Endothelial cell of umbilical vein (primary cell): ENCODE measurements at regions of chr9 and their contacts with region 1.

Region 1: GRCh38 chr9:34252670-34253459 is 74.0 kb downstream of the UBAP1 start:
- DNase-seq: peak; percentile 52
- H3K4me3 ChIP-seq: no peak overlapping the region
- H3K27ac ChIP-seq: no peak overlapping the region
- H3K4me1 ChIP-seq: no peaks in the 10 kb centered on the region
- H3K27me3 ChIP-seq: no peaks in the 10 kb centered on the region
- CTCF ChIP-seq: peak; percentile 80 to 83
- POLR2A ChIP-seq: no peak

Region 2: GRCh38 chr9:34139477-34140146 is 113.3 kb before region 1 on chr9:
- CTCF ChIA-PET with region 1: interaction called, 10 read pairs
- POLR2A ChIA-PET with region 1: interaction called, 4 read pairs
- dilution Hi-C with region 1: no loop called
- intact Hi-C with region 1: no loop called
- DNase-seq: peak; percentile 89
- H3K4me3 ChIP-seq: no peak overlapping the region
- H3K27ac ChIP-seq: no peak overlapping the region
- H3K4me1 ChIP-seq: no peaks in the 10 kb centered on the region
- H3K27me3 ChIP-seq: no peaks in the 10 kb centered on the region
- CTCF ChIP-seq: peak; percentile 14 to 54
- POLR2A ChIP-seq: no peak

Region 3: DNA sequence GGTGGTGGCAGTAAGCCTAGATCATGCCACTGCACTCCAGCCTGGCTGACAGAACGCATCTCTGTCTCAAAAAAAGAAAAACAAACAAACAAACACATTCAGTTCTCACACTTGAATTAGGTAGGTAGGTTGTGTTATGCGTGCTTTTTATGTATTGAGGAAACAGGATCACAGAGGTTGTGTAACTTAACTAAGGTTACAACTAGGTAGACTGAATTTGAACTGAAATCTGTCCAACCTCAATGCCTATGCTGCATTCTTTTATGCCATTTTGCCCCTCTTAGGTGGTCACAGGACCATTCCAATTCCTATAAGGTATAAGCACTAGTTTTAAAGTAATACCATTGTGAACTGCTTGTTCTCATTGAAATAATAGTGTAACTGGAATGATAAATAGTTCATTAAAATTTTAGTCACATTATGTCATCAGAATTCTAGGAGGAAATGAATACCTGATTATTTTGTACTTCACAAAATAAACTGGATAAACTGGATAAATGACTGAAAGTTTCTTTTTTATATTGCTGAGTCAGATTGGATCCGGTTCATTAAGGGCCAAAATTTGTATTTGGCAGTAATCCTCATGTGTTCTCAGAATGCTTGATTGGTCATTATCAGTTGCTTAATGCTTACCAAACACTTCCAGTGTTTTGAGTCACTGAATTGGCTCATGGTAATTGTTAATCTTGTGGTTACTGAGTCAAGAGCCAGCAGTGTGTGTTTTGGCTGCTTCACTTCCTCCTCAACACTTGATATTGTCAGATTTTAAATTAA is 66.9 kb before region 1 on chr9:
- CTCF ChIA-PET with region 1: no interaction called
- POLR2A ChIA-PET with region 1: interaction called, 3 read pairs
- dilution Hi-C with region 1: no loop called
- intact Hi-C with region 1: loop called (anchors 2 kb)
- DNase-seq: peak; percentile 92
- H3K4me3 ChIP-seq: peak overlapping the region in 1 of 3 experiments; percentile 34
- H3K27ac ChIP-seq: peak overlapping the region; percentile 50
- H3K4me1 ChIP-seq: peaks cover 20% of the 10 kb centered on the region
- H3K27me3 ChIP-seq: no peaks in the 10 kb centered on the region
- CTCF ChIP-seq: no peak
- POLR2A ChIP-seq: peak; percentile 63

Region 4: DNA sequence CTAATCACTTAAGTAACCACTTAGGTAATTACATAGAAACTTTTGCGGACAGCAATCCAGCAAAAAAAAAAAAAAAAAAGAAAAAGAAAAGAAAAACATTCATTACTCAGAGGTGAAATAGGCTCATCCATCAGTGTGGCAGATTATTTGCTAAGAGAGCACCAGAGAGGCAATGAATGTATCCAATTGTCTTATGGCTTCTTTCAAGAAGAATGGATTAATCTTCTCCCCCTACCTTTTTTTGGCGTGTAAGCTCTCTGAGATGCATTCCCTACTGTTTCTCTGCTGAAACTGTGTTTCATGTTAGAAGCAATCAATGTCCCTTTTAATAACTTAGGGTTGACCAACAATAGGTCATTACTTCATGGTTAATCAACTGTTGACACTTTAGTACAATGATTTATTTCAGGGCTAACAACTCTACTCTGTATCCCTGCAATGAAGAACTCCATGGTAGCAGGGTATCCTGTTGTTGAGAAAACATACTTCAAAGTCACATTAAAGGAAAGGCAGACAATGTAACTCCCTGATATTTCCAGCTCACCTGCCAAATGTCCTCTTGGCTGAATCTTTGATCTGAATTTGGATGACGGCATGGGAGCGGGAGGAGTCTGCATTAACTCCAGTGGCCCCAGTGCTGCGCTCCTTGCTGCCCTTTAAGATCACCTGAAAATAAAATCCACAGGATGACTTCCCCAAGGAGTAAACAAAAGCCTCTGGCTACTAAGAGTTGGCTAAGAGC is 18.6 kb after region 1 on chr9:
- CTCF ChIA-PET with region 1: interaction called, 43 read pairs
- POLR2A ChIA-PET with region 1: no interaction called
- dilution Hi-C with region 1: no loop called
- intact Hi-C with region 1: no loop called
- DNase-seq: no peak
- H3K4me3 ChIP-seq: no peak overlapping the region
- H3K27ac ChIP-seq: no peak overlapping the region
- H3K4me1 ChIP-seq: no peaks in the 10 kb centered on the region
- H3K27me3 ChIP-seq: no peaks in the 10 kb centered on the region
- CTCF ChIP-seq: no peak
- POLR2A ChIP-seq: no peak

Region 5: DNA sequence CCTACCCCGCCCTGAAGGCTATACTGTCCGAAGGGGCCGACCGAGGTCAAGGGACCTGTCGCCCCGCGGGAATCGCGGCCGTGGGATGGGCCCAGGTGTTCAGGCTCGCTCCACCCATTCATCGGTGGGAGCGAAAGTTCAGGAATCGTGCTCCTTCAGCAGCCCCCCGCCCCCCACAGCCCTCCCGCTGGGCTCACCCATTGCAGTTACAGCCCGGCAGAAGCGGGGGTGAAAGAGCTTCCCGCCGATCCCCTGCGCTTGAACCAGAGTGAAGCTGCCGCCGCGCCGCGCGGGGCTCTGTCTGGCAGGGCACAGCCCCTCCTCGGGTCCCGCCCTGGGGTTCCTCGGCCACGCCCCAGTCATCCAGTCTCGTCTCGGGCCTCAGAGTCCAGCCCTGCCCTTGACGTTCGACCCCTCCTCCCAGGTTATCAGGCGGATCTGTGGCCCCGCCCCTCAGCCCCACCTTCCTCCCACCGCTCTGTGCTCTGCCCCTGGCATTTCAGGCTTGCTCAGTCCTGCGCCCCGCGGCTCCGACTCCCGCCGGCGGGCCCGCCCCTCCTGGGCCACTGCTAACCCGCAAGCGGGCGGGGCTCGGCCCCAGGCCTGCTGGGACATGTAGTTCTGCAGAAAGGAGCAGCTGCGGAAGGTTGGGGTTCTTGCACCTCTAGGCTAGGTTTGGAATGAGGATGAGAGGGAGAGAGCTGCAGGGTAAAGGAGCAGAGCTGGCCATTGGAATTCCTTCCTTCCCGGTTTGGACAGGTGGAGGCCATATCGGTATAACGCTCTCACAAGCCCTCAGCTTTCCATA is 123.9 kb after region 1 on chr9 and contains the start of gene MYORG:
- CTCF ChIA-PET with region 1: interaction called, 42 read pairs
- POLR2A ChIA-PET with region 1: no interaction called
- dilution Hi-C with region 1: no loop called
- intact Hi-C with region 1: loop called (anchors 1 kb)
- DNase-seq: peak; percentile 84
- H3K4me3 ChIP-seq: peak within 1 kb of the TSS; percentile 44 to 79 (median 65)
- H3K27ac ChIP-seq: no peak within 1 kb of the TSS
- H3K4me1 ChIP-seq: peaks cover 11% of the 10 kb centered on the region
- H3K27me3 ChIP-seq: no peaks in the 10 kb centered on the region
- CTCF ChIP-seq: no peak
- POLR2A ChIP-seq: no peak
- total RNA-seq, gene MYORG: 6.3 and 7.0 TPM in 2 replicates